CD14-positive monocyte (primary cell): ENCODE measurements at regions of chr5 and their contacts with region 1.

Region 1: DNA sequence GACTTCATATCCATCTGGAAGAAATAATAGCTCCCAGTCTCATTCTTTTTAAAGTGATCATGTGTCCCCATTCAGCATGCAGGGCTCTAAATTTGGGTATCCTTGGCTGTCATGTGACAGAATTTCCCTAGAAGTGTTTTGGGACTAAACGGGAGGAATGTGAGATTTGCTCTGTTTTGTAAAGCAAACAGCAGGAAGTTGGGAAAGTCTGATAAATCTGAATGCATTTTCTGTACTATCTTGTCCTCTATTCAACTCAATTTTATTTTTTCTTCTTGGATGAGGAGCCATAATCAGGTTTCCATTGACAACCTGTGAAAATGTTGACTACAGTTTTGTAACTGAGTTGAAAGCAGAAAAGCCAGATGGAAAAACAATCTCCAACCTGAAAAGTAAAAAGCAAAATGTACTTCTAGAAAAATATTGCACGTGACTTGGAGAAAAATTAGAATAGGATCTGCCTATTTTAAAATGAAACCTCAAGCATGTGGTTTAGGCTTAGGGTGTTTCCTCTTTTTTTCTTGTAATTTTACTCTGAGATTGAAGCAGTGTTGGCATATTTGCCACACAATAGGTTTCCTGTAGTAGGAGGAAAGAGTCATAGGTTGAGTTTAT is 76.2 kb upstream of the IL6ST start:
- DNase-seq: peak; percentile 32 to 62 (median 43)
- H3K4me3 ChIP-seq: peak overlapping the region in 2 of 3 experiments; percentile 17 to 54
- H3K4me3 Mint-ChIP-seq: peak overlapping the region in 1 of 2 donors; percentile 66
- H3K27ac ChIP-seq: peak overlapping the region; percentile 68 to 74
- H3K27ac Mint-ChIP-seq: peak overlapping the region; percentile 71 to 86 (median 84)
- H3K4me1 ChIP-seq: peaks cover 27 to 46% of the 10 kb centered on the region in 2 donors
- H3K4me1 Mint-ChIP-seq: peaks cover 57% of the 10 kb centered on the region
- H3K27me3 ChIP-seq: no peaks in the 10 kb centered on the region
- H3K27me3 Mint-ChIP-seq: peaks cover 2 to 14% (median 5%) of the 10 kb centered on the region in 3 donors
- CTCF ChIP-seq: no peak

Region 2: GRCh38 chr5:56148453-56148971 is 77.6 kb after region 1 on chr5:
- intact Hi-C with region 1: loop called in 1 of 2 experiments (anchors 10 kb)
- DNase-seq: peak in 1 of 3 donors; percentile 46
- H3K4me3 ChIP-seq: peak overlapping the region in 1 of 3 experiments; percentile 49
- H3K4me3 Mint-ChIP-seq: no peak overlapping the region
- H3K27ac ChIP-seq: peak overlapping the region in 1 of 2 donors; percentile 61
- H3K27ac Mint-ChIP-seq: peak overlapping the region; percentile 61 to 88 (median 83)
- H3K4me1 ChIP-seq: peaks cover 65 to 74% of the 10 kb centered on the region in 2 donors
- H3K4me1 Mint-ChIP-seq: peaks cover 65% of the 10 kb centered on the region
- H3K27me3 ChIP-seq: no peaks in the 10 kb centered on the region
- H3K27me3 Mint-ChIP-seq: peaks cover 0 to 1% (median 0%) of the 10 kb centered on the region in 3 donors
- CTCF ChIP-seq: no peak